BJ (cell line): ENCODE measurements at regions of chr2 and their contacts with region 1.

Region 1: DNA sequence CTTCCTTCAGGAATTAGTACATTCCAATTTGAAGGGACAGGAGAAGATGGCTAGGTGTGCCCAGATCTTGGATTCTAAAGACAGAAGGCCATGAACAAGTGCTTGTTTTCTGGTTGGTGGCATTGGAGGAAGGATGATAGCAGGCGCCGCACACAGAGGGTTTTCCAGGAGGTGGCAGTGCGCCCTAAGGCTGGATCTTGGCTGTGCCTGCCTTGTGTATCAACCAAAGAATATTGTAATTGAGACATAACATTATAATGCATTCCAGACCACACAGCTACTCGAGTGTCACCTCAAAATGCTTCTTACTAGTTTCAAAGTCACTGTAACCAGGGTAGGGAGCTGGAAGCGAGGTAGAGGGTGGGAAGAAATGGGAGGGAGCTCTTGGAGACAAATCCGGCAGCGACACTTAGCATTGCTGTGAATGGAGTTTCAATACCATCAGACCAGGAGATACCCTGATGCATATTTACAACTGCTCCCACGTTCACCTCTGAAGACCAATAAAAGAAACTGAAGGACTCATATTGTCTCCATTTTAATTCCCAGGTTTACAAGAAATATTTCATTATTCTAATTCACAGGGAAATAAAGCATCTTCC is 42.5 kb downstream of the CPO start:
- DNase-seq: no peak
- H3K4me3 ChIP-seq: no peak overlapping the region
- H3K27me3 ChIP-seq: no peaks in the 10 kb centered on the region
- CTCF ChIP-seq: peak; percentile 91

Region 2: GRCh38 chr2:206800506-206801417 is 181.1 kb before region 1 on chr2:
- CTCF ChIA-PET with region 1: interaction called, 22 read pairs
- POLR2A ChIA-PET with region 1: no interaction called
- DNase-seq: peak; percentile 20
- H3K4me3 ChIP-seq: no peak overlapping the region
- H3K27me3 ChIP-seq: no peaks in the 10 kb centered on the region
- CTCF ChIP-seq: peak; percentile 68

Region 3: DNA sequence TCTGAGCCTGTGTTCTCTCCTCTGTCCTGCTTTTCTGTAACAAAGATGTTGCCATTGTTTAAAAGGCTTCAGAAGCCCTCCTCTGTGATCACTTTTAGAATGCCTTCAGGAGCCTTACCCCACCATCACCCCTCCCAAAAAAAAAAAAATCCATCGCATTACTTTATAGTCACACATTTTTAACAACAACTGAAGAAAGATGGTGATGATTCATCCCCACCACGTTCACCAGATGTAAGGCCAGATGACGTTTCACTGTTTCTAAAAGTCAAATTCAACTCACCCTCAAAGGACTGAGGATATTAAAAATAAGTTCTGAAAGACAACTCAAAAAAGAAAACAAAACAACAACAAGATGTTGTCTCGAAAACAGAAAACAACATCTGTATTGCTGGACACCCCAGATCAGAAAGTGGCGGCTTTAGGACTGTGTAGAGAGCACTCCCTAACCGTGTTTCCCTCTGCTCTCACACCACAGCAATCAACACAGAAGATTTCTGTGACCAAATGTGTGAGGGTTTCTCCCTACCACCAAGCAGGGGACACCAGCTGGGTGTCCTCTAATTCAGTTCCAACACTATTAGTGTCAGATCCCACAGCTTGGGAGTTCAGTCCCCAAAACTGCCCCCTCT is 486.0 kb after region 1 on chr2:
- CTCF ChIA-PET with region 1: interaction called, 84 read pairs
- POLR2A ChIA-PET with region 1: interaction called, 3 read pairs
- DNase-seq: peak; percentile 58
- H3K4me3 ChIP-seq: no peak overlapping the region
- H3K27me3 ChIP-seq: no peaks in the 10 kb centered on the region
- CTCF ChIP-seq: no peak